Ascending aorta (tissue), 2 donors: ENCODE measurements at regions of chr16 and their contacts with region 1.

Region 1: DNA sequence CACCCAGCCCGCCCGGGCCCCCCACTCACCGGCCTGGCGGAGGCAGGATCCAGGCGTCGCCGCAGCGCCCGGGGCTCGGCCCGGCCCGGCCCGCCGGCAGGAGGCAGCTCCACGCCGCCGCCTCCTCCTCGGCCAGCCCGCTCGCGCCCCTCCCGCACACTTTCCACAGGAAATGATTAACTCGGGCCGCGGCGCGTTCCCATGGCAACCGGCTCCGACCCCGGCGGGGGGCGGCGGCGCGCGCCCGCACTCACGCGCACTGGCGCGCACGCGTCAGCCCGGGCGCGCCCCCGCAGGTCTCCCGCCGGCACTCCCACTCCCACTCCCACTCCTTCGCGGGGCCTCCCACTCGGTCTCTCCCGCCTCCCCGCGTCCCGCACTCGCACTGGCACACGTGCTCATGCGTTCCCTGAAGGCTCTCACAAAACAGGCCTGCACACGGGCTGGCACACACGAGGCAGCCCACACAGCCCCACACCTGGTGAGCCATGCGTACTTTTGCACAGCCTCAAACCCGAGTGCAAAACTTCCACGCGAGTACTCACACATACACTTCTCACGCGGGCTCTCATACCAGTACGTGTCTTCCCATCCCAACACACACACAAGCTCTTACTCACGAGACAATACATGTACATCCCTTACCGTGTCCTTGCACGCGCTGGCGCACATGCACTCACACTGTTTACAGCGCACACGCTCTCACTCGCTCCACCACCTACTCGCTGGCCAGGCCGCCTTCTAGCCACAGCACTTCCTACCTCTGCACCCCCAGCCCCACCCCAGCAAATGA is at the start of gene KIFC3:
- DNase-seq: peak; percentile 50 to 95
- H3K4me3 ChIP-seq: peak within 1 kb of the TSS; percentile 68 to 84
- H3K27ac ChIP-seq: peak within 1 kb of the TSS; percentile 81 to 85
- H3K4me1 ChIP-seq: peaks cover 3 to 28% of the 10 kb centered on the region in 2 donors
- H3K27me3 ChIP-seq: no peaks in the 10 kb centered on the region
- CTCF ChIP-seq: peak in 2 of 3 experiments; percentile 3 to 76
- total RNA-seq, gene KIFC3: 54.9 TPM

Region 2: DNA sequence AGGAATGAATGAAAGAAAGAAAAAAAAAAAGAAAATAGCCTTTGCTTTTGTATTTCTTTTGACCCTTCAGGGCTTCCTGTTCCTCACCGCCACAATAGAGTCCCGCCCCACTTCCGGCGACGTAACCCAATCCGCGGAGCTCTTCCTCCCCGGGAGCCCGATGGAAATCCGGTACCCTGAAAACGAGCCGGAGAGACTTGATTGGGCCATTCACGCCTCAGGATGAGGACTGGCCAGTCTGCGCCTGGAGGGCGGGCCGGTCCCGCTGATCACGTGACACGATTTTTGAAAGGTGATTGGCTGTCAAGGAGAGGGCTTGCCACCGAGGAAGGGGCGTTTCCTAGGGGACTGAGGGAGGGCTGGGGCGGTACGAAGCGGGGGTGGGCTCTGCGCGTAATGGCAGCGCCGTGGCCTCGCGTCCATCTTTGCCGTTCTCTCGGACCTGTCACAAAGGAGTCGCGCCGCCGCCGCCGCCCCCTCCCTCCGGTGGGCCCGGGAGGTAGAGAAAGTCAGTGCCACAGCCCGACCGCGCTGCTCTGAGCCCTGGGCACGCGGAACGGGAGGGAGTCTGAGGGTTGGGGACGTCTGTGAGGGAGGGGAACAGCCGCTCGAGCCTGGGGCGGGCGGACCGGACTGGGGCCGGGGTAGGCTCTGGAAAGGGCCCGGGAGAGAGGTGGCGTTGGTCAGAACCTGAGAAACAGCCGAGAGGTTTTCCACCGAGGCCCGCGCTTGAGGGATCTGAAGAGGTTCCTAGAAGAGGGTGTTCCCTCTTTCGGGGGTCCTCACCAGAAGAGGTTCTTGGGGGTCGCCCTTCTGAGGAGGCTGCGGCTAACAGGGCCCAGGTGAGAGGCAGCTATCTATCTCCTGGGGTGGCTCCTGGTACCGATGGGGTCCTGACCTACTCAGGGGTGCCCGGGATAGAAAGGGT is 616.3 kb before region 1 on chr16 and contains the starts of genes PSME3IP1 and RSPRY1:
- intact Hi-C with region 1: loop called (anchors 10 kb)
- DNase-seq: peak; percentile 98 to 99
- H3K4me3 ChIP-seq: peak within 1 kb of the TSS; percentile 78 to 94
- H3K27ac ChIP-seq: peak within 1 kb of the TSS; percentile 95 to 96
- H3K4me1 ChIP-seq: peaks cover 5 to 33% of the 10 kb centered on the region in 2 donors
- H3K27me3 ChIP-seq: no peaks in the 10 kb centered on the region
- CTCF ChIP-seq: no peak
- total RNA-seq, gene PSME3IP1: 32.6 TPM
- total RNA-seq, gene RSPRY1: 29.3 TPM

Region 3: GRCh38 chr16:57757326-57757786 is 45.2 kb before region 1 on chr16:
- intact Hi-C with region 1: loop called (anchors 2 kb)
- DNase-seq: peak; percentile 46 to 93
- H3K4me3 ChIP-seq: no peak overlapping the region
- H3K27ac ChIP-seq: no peak overlapping the region
- H3K4me1 ChIP-seq: no peaks in the 10 kb centered on the region
- H3K27me3 ChIP-seq: no peaks in the 10 kb centered on the region
- CTCF ChIP-seq: peak; percentile 92 to 98 (median 92)

Region 4: DNA sequence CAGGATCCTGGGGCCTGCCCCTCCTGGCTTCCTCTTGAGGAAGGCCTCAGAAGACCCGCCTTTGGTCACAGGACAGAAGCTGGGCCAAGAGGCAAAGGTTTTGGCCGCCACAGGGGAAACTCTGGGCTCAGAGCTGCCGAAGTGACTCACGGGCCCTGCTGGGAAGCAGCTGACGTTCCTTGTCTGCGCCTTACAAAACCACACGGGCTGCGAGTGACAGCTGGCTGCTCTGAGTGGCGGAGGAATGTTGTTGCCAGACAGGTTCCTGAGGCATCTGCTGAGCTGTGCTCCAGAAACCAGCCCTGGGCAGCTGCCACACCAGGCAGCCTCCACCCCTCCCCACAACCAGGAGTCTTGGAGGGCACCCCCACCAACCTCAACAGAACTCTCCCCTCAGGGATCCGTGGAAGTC is 13.8 kb after region 1 on chr16:
- intact Hi-C with region 1: loop called (anchors 1 kb)
- DNase-seq: peak; percentile 86 to 97
- H3K4me3 ChIP-seq: no peak overlapping the region
- H3K27ac ChIP-seq: peak overlapping the region; percentile 87 to 92
- H3K4me1 ChIP-seq: peaks cover 4 to 16% of the 10 kb centered on the region in 2 donors
- H3K27me3 ChIP-seq: no peaks in the 10 kb centered on the region
- CTCF ChIP-seq: no peak

Region 5: DNA sequence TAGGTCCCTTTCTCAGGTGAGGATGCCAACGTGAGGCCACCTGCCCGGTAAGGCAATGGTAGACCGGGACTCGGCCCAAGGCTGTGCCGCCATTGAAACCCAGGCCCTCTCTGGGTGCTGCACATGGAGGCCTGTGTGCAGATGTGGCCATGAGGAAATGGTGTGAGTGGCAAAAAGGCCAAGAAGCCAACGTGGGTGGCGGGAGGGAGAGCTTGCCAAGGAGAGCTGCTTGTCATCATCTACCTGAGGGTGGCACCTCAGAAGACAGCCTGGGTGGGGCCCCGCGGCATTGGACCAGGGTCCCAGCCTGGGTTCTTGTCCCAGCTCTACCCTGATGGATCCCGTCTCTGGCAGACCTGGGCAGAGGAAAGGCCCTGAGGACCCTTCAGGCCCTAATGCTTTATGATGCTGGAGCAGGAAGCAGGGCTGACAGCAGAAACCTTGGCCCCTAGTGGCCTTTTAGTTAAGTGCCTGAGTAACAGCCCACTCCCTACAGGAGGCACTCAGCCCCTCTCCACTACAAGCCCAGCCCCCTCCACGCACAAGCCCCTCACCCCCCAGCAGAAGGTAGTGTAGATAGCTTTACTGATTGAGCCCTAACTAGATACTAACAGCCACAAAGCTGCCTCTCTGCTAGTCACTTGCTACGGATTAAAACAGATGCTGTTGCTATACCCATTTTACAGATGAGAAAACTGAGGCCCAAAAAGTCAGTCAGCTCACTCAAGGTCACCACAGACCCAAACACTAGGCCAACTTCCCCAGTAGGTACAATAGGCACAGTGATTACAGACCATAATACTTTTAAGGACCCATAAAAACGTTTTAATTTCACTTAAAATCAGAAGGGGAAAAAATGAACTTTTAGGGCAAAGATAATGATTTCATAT is 26.0 kb after region 1 on chr16:
- intact Hi-C with region 1: loop called (anchors 1 kb)
- DNase-seq: no peak
- H3K4me3 ChIP-seq: no peak overlapping the region
- H3K27ac ChIP-seq: no peak overlapping the region
- H3K4me1 ChIP-seq: peaks cover 4 to 7% of the 10 kb centered on the region in 2 donors
- H3K27me3 ChIP-seq: no peaks in the 10 kb centered on the region
- CTCF ChIP-seq: no peak

Region 6: GRCh38 chr16:57863434-57864160 is 61.1 kb after region 1 on chr16:
- intact Hi-C with region 1: loop called (anchors 1 kb)
- DNase-seq: peak in 1 of 2 donors; percentile 81
- H3K4me3 ChIP-seq: no peak overlapping the region
- H3K27ac ChIP-seq: no peak overlapping the region
- H3K4me1 ChIP-seq: no peaks in the 10 kb centered on the region
- H3K27me3 ChIP-seq: no peaks in the 10 kb centered on the region
- CTCF ChIP-seq: peak; percentile 40 to 77 (median 57)

Region 7: GRCh38 chr16:58129097-58129936 is 326.8 kb after region 1 on chr16 and contains the start of gene CFAP20:
- intact Hi-C with region 1: loop called (anchors 2 kb)
- DNase-seq: peak; percentile 94 to 100
- H3K4me3 ChIP-seq: peak within 1 kb of the TSS; percentile 93 to 99
- H3K27ac ChIP-seq: peak within 1 kb of the TSS; percentile 84 to 91
- H3K4me1 ChIP-seq: peaks cover 17 to 33% of the 10 kb centered on the region in 2 donors
- H3K27me3 ChIP-seq: no peaks in the 10 kb centered on the region
- CTCF ChIP-seq: no peak
- total RNA-seq, gene CFAP20: 39.1 TPM